ENCODE measurements at regions of chr11 and their contacts with region 1.

Region 1: GRCh38 chr11:22780952-22781593 is 48.5 kb downstream of the SVIP start:
- DNase-seq: no peak
- ATAC-seq: peak; percentile 81
- H3K4me3 ChIP-seq: no peak overlapping the region
- H3K27ac ChIP-seq: no peak overlapping the region
- H3K4me1 ChIP-seq: peaks cover 11% of the 10 kb centered on the region
- H3K27me3 ChIP-seq: no peaks in the 10 kb centered on the region
- CTCF ChIP-seq: no peak
- EP300 ChIP-seq: 0 out of 4 replicates have a peak, but pooled peaks of 1 of the 2 experiments have one; percentile 40
- POLR2A ChIP-seq: no peak
- RAD21 ChIP-seq: no peak

Region 2: DNA sequence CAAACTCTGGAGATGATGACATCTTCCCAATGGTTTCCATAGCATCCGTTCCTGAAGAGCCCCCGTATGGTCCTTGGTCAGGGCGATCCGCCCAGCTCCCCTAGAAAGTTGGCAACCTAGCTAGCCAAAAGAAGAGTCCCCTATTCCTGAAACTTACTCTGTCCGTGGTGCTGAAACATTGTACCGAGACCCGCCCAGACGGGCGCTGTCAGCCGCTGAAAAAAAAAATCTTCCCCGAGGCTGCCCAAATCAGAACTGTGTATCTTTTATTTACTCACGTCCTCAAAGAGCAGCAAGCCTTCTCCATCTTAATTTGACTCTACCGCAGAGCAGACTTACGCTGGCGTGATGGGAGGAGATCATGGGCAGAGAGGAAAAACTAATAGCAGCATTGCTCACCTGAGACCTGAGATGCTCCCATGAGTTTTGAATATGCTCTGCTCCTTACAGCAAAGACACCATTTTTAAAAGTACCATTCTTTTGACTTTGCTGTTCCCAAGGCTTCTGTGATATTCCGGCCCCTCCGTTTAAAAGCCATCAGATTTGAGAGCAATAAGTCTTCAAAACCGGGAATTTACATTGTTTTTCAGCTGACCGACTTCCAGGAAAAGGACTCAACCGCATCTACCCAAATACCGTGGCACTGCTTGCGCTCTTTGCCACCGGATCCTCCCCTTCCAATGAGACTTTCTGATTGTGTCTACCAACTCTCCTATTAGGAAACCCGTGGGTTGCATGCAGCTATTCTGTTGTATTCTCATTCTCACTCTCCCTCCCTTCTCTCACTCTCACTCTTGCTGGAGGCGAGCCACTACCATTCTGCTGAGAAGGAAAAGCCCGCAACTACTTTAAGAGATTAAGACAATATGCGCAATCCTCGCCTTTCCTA is 443.2 kb before region 1 on chr11 and contains the start of gene SLC17A6:
- CTCF ChIA-PET with region 1: interaction called, 44 read pairs
- POLR2A ChIA-PET with region 1: no interaction called
- RAD21 ChIA-PET with region 1: interaction called, 3 read pairs
- SMC1A ChIA-PET with region 1: interaction called, 3 read pairs
- in situ Hi-C with region 1: loop called (anchors 5 kb)
- intact Hi-C with region 1: no loop called
- DNase-seq: no peak
- ATAC-seq: peak; percentile 76
- H3K4me3 ChIP-seq: no peak within 1 kb of the TSS
- H3K27ac ChIP-seq: no peak within 1 kb of the TSS
- H3K4me1 ChIP-seq: no peaks in the 10 kb centered on the region
- H3K27me3 ChIP-seq: peaks cover 15 to 24% of the 10 kb centered on the region in 2 experiments
- CTCF ChIP-seq: no peak
- EP300 ChIP-seq: no peak
- POLR2A ChIP-seq: no peak
- RAD21 ChIP-seq: no peak
- polyA plus RNA-seq, gene SLC17A6: not detected

Region 3: GRCh38 chr11:22657101-22657694 is 123.9 kb before region 1 on chr11:
- CTCF ChIA-PET with region 1: interaction called, 3 read pairs
- POLR2A ChIA-PET with region 1: interaction called, 8 read pairs
- RAD21 ChIA-PET with region 1: interaction called, 17 read pairs
- SMC1A ChIA-PET with region 1: interaction called, 19 read pairs
- in situ Hi-C with region 1: no loop called
- intact Hi-C with region 1: no loop called
- DNase-seq: no peak
- ATAC-seq: peak; percentile 92
- H3K4me3 ChIP-seq: no peak overlapping the region
- H3K27ac ChIP-seq: peak overlapping the region; percentile 42; the same call in 1 of the 2 replicates
- H3K4me1 ChIP-seq: peaks cover 6% of the 10 kb centered on the region
- H3K27me3 ChIP-seq: no peaks in the 10 kb centered on the region
- CTCF ChIP-seq: no peak
- EP300 ChIP-seq: peak in 1 of 2 experiments; percentile 46; a peak in 2 of 4 replicates
- POLR2A ChIP-seq: no peak
- RAD21 ChIP-seq: no peak

Region 4: GRCh38 chr11:22703040-22703439 is 78.0 kb before region 1 on chr11:
- CTCF ChIA-PET with region 1: interaction called, 5 read pairs
- POLR2A ChIA-PET with region 1: interaction called, 4 read pairs
- RAD21 ChIA-PET with region 1: interaction called, 7 read pairs
- SMC1A ChIA-PET with region 1: interaction called, 10 read pairs
- in situ Hi-C with region 1: no loop called
- intact Hi-C with region 1: no loop called
- DNase-seq: peak; percentile 21
- ATAC-seq: peak; percentile 76
- H3K4me3 ChIP-seq: no peak overlapping the region
- H3K27ac ChIP-seq: no peak overlapping the region
- H3K4me1 ChIP-seq: no peaks in the 10 kb centered on the region
- H3K27me3 ChIP-seq: no peaks in the 10 kb centered on the region
- CTCF ChIP-seq: no peak
- EP300 ChIP-seq: peak in 1 of 2 experiments; percentile 43; a peak in 1 of 4 replicates
- POLR2A ChIP-seq: no peak
- RAD21 ChIP-seq: no peak

Region 5: DNA sequence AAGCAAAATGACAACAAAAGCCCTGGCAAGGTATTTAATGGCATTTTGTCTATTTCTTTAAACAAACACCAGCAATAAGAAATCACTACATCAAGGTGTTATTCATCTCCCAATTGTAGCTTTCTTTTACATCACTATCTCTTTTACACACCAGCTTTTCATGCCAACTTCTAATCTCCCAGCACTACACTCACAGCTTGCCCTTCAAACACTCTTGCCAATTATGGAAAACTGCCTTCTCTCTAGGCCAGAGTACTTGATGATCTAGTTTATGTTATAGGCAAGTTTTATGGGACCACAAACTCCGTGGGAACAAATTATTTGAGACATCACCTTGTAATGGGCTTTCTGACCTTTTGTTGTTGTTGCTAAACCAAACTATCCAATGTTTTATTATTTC is 12.8 kb before region 1 on chr11:
- CTCF ChIA-PET with region 1: interaction called, 77 read pairs
- POLR2A ChIA-PET with region 1: interaction called, 5 read pairs
- RAD21 ChIA-PET with region 1: interaction called, 3 read pairs
- SMC1A ChIA-PET with region 1: interaction called, 19 read pairs
- in situ Hi-C with region 1: no loop called
- intact Hi-C with region 1: no loop called
- DNase-seq: no peak
- ATAC-seq: no peak
- H3K4me3 ChIP-seq: no peak overlapping the region
- H3K27ac ChIP-seq: no peak overlapping the region
- H3K4me1 ChIP-seq: no peaks in the 10 kb centered on the region
- H3K27me3 ChIP-seq: no peaks in the 10 kb centered on the region
- CTCF ChIP-seq: no peak
- EP300 ChIP-seq: no peak
- POLR2A ChIP-seq: no peak
- RAD21 ChIP-seq: no peak